ENCODE measurements at regions of chrX and their contacts with region 1.

Region 1: GRCh38 chrX:35244796-35245508 is 302.4 kb downstream of the FAM47B start:
- DNase-seq: no peak
- H3K4me3 ChIP-seq: no peak overlapping the region
- H3K27ac ChIP-seq: no peak overlapping the region
- H3K4me1 ChIP-seq: no peaks in the 10 kb centered on the region
- CTCF ChIP-seq: no peak

Region 2: DNA sequence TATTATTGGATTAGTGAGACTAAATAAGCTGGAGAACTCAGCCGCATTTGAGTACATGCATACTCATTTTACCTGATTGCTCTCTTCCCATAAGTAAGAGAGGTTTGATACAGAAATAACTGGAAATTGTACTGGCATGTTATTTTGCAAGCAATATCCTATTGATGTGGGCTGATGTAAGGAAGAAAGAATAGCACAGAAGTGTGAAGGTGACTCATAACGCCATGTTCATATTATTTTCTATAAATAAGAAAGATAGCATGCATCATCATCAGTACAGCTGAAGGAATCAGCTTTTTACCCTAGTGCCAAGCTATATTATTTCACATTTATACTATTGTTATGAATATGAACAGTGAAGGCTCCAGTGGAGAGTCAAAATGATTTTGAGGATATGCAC is 974.5 kb before region 1 on chrX:
- CTCF ChIA-PET with region 1: no interaction called
- POLR2A ChIA-PET with region 1: no interaction called
- intact Hi-C with region 1: loop called (anchors 10 kb)
- DNase-seq: no peak
- H3K4me3 ChIP-seq: no peak overlapping the region
- H3K27ac ChIP-seq: no peak overlapping the region
- H3K4me1 ChIP-seq: no peaks in the 10 kb centered on the region
- CTCF ChIP-seq: no peak